ENCODE measurements at regions of chr1 and their contacts with region 1.

Region 1: GRCh38 chr1:202304375-202304774 is 37.4 kb downstream of the UBE2T start:
- DNase-seq: no peak
- H3K4me3 ChIP-seq: no peak overlapping the region
- H3K27ac ChIP-seq: no peak overlapping the region
- H3K4me1 ChIP-seq: no peaks in the 10 kb centered on the region
- H3K27me3 ChIP-seq: no peaks in the 10 kb centered on the region
- CTCF ChIP-seq: no peak

Region 2: DNA sequence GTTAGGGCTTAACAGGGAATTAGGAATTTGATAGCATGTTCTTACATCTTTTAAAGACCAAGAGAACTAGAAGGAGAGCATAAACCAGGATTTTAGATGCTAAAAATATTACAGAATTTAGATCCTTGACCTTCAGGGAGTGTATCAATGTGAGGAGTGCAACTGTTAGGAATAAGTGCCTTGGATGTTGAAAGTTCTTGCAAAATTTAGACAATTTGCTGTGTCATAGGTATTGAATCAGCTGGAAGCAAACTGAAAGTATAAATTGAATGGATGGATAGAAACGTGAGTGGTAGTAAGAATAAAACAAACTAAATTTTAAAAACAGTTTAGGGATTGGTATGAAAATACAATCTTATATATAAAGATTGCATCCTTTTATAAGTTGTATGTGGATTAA is 71.9 kb after region 1 on chr1:
- CTCF ChIA-PET with region 1: interaction called, 10 read pairs
- POLR2A ChIA-PET with region 1: no interaction called
- intact Hi-C with region 1: no loop called
- DNase-seq: no peak
- H3K4me3 ChIP-seq: no peak overlapping the region
- H3K27ac ChIP-seq: no peak overlapping the region
- H3K4me1 ChIP-seq: no peaks in the 10 kb centered on the region
- H3K27me3 ChIP-seq: no peaks in the 10 kb centered on the region
- CTCF ChIP-seq: no peak

Measured in A673 (cell line).